ENCODE measurements at regions of chr5 and their contacts with region 1.

Region 1: DNA sequence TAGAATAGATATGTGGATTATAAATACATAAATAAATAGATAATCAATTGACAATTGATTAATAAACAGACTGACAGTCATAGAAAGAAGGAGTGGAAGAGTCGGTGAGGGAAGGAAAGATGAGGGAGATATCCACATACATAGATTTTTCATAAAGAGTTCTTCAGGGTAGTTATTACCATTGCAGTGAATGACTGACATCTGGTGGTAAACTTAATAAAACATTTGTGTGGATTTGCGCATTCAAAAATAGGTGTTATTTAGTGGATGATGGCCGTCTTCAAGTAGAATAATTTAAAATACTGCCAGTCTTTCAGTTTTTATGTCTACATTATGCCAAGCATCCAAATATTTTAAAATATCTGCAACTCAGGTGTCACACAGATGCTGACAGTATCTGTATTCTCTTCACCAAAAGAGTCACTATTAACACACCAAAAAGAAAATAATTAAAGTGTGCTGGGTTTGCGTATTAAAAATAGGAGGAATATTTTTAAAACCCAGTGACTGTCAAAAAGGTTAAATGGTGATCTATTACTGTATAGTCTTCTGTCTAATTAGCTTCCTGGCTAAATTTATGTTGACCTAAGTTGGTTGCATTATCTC is 78.8 kb downstream of the GIN1 start:
- DNase-seq: peak; percentile 5
- ATAC-seq: no peak
- H3K4me3 ChIP-seq: no peak overlapping the region
- H3K4me3 Mint-ChIP-seq: no peak overlapping the region
- H3K27ac ChIP-seq: no peak overlapping the region
- H3K27ac Mint-ChIP-seq: no peak overlapping the region
- H3K4me1 ChIP-seq: no peaks in the 10 kb centered on the region
- H3K4me1 Mint-ChIP-seq: no peaks in the 10 kb centered on the region
- H3K27me3 ChIP-seq: no peaks in the 10 kb centered on the region
- H3K27me3 Mint-ChIP-seq: peaks cover 9% of the 10 kb centered on the region
- CTCF ChIP-seq: peak; percentile 7

Region 2: GRCh38 chr5:102536323-102536928 is 504.7 kb before region 1 on chr5:
- CTCF ChIA-PET with region 1: interaction called, 3 read pairs
- POLR2A ChIA-PET with region 1: no interaction called
- intact Hi-C with region 1: loop called (anchors 5 kb)
- DNase-seq: no peak
- ATAC-seq: no peak
- H3K4me3 ChIP-seq: no peak overlapping the region
- H3K4me3 Mint-ChIP-seq: no peak overlapping the region
- H3K27ac ChIP-seq: no peak overlapping the region
- H3K27ac Mint-ChIP-seq: no peak overlapping the region
- H3K4me1 ChIP-seq: peaks cover 0 to 4% of the 10 kb centered on the region in 2 donors
- H3K4me1 Mint-ChIP-seq: peaks cover 4% of the 10 kb centered on the region
- H3K27me3 ChIP-seq: no peaks in the 10 kb centered on the region
- H3K27me3 Mint-ChIP-seq: peaks cover 4% of the 10 kb centered on the region
- CTCF ChIP-seq: peak; percentile 63

Region 3: DNA sequence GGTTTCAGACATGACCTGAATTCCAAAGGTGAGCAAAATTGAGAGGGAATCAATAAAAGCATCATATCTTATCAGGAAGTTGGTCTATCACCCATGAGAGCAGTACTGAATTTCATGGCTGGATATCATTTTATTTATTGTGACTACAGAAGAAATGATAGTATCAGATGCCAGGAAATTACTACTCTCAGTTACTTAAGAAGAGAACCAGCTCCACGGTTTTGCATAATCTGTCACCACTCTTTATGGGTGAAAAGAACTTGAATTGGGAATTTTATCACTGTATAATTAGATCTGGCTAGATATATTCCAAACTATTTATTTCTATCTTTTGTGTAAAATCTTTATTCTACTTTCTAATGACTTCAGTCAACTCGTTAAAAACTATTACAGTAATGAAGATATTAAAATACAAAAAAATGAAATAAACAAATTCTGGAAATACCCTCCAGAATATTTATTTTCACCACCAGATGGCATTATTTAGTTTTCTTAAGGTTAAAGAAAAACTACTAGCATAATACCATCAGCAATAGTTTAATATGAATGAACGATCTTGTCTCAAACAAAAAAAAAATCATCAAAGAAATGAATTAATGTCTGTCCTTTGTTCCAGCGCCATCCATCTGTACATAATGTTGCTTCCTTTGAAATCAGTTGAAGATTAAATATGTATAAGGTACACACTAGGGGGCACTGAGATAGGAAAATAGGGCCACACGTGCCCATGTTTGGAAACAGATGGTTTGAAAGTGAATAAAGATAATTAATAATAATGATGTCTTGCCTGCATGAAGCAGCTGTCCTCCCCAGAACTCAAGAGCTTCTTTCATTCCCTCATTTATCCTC is 457.7 kb before region 1 on chr5:
- CTCF ChIA-PET with region 1: interaction called, 3 read pairs
- POLR2A ChIA-PET with region 1: no interaction called
- intact Hi-C with region 1: loop called (anchors 2 kb)
- DNase-seq: peak; percentile 18
- ATAC-seq: no peak
- H3K4me3 ChIP-seq: no peak overlapping the region
- H3K4me3 Mint-ChIP-seq: no peak overlapping the region
- H3K27ac ChIP-seq: no peak overlapping the region
- H3K27ac Mint-ChIP-seq: no peak overlapping the region
- H3K4me1 ChIP-seq: no peaks in the 10 kb centered on the region
- H3K4me1 Mint-ChIP-seq: no peaks in the 10 kb centered on the region
- H3K27me3 ChIP-seq: no peaks in the 10 kb centered on the region
- H3K27me3 Mint-ChIP-seq: peaks cover 3% of the 10 kb centered on the region
- CTCF ChIP-seq: peak; percentile 65

Region 4: DNA sequence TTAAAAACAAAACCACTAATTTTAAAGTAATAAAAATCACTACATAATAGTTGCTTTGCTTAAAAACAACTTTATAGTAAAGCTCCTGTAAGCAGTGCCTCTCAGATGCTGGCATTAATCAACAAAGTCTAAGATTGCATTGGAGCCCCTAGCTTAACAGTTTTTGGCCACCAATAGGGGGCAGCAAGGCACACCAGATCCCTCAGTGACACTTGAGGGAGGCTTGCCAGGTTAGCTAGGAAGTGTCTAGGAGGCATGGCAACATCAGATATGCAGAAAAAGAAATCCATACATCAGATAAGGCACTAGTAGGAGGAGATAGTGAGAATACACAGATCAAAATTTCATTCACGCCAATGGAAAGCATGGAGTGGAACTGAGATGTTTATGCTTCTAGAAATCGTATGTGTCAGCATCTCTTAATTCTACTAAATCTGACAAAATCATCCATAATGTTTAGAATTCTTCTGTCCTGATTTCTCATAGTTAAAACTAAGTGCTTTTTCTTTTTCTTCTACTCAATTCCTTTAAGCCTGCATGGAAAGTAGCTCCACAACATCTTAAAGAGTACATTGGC is 359.7 kb before region 1 on chr5:
- CTCF ChIA-PET with region 1: interaction called, 4 read pairs
- POLR2A ChIA-PET with region 1: no interaction called
- intact Hi-C with region 1: loop called (anchors 2 kb)
- DNase-seq: peak; percentile 28
- ATAC-seq: peak; percentile 47
- H3K4me3 ChIP-seq: no peak overlapping the region
- H3K4me3 Mint-ChIP-seq: no peak overlapping the region
- H3K27ac ChIP-seq: no peak overlapping the region
- H3K27ac Mint-ChIP-seq: no peak overlapping the region
- H3K4me1 ChIP-seq: no peaks in the 10 kb centered on the region
- H3K4me1 Mint-ChIP-seq: no peaks in the 10 kb centered on the region
- H3K27me3 ChIP-seq: peaks cover 0 to 2% (median 0%) of the 10 kb centered on the region in 4 experiments
- H3K27me3 Mint-ChIP-seq: no peaks in the 10 kb centered on the region
- CTCF ChIP-seq: peak; percentile 64

Region 5: GRCh38 chr5:102778478-102778877 is 262.7 kb before region 1 on chr5:
- CTCF ChIA-PET with region 1: no interaction called
- POLR2A ChIA-PET with region 1: no interaction called
- intact Hi-C with region 1: loop called (anchors 2 kb)
- DNase-seq: no peak
- ATAC-seq: no peak
- H3K4me3 ChIP-seq: no peak overlapping the region
- H3K4me3 Mint-ChIP-seq: no peak overlapping the region
- H3K27ac ChIP-seq: no peak overlapping the region
- H3K27ac Mint-ChIP-seq: no peak overlapping the region
- H3K4me1 ChIP-seq: no peaks in the 10 kb centered on the region
- H3K4me1 Mint-ChIP-seq: peaks cover 3% of the 10 kb centered on the region
- H3K27me3 ChIP-seq: no peaks in the 10 kb centered on the region
- H3K27me3 Mint-ChIP-seq: no peaks in the 10 kb centered on the region
- CTCF ChIP-seq: no peak

Measured in B cell (primary cell).